Activated naive CD4-positive, alpha-beta T cell treated with anti-CD3 and anti-CD28 coated beads for 36 hours (primary cell): ENCODE measurements at regions of chr14 and their contacts with region 1.

Region 1: DNA sequence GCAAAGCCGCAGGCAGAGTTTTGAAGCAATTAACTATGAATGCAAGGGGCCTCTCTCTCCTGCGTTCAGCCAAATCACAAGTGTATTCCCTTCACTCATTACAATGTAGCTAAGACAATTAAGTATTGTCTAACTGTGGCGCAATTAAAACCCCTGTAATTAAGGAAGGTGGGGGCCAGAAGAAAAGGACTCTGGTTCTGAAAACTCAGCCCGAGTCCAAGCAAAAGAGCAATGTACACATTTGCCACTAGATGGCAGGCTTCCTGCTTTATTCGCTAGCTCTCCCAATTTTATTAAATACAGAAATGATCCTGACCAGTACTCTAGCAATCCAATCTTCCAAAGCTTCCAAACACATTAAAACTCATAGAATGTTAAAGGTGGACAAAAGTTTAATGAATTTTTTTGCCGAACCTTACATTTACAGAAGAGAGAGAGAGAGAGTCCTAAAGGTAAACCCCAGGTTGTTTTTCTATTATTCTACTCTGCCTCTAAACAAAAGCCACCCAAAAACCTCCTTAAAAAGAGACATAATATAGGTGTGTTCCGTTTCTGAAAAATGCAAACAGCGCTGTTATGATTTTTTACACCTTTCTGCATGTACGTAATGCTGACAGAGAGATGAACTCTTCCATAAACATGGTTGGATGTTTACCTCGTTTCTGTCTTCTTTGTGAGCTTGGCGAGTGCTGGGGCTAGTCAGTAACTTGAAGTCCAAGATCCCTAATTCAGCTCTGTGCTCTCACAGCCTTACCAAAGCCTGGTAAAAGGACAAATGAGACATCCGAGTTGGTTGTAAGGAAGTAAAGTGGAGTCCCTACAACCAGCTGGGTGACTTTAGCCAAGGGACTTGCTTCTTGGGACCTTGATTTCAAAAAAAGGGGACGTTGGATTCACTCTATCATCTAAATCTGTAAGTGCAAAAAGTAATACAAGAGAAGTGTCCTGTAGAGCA is 50.9 kb upstream of the VASH1 start:
- DNase-seq: peak; percentile 53
- H3K4me3 Mint-ChIP-seq: no peak overlapping the region
- H3K27ac Mint-ChIP-seq: no peak overlapping the region
- H3K4me1 Mint-ChIP-seq: no peaks in the 10 kb centered on the region
- H3K27me3 Mint-ChIP-seq: peaks cover 3% of the 10 kb centered on the region

Region 2: DNA sequence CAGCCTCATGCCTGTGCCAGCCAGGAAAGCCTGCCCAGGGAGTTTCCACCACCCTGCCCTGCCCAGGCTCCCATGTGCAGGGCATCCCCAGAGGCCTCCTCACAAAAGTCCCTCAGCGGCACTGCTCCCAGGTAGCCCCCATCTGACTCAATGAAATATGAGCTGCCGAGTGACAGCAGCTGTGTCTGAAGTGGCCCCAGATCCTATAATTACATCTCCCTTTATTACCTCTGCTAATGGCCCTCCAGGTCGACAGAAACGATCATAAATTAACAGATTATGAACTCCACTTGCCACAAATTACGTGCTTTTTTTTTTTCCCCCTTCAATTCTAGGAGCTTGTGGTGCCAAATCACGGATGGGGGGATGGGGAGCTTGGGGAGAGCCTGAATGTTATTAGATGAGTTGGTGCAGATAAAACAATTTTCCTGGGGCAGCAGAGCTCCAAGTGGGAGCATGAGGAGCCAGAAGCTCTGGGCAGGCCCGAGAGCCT is 224.0 kb before region 1 on chr14:
- CTCF ChIA-PET with region 1: no interaction called
- intact Hi-C with region 1: no loop called
- DNase-seq: no peak
- H3K4me3 Mint-ChIP-seq: no peak overlapping the region
- H3K27ac Mint-ChIP-seq: no peak overlapping the region
- H3K4me1 Mint-ChIP-seq: no peaks in the 10 kb centered on the region
- H3K27me3 Mint-ChIP-seq: no peaks in the 10 kb centered on the region

Region 3: GRCh38 chr14:76677534-76678145 is 32.7 kb before region 1 on chr14:
- CTCF ChIA-PET with region 1: no interaction called
- intact Hi-C with region 1: no loop called
- DNase-seq: no peak
- H3K4me3 Mint-ChIP-seq: no peak overlapping the region
- H3K27ac Mint-ChIP-seq: no peak overlapping the region
- H3K4me1 Mint-ChIP-seq: no peaks in the 10 kb centered on the region
- H3K27me3 Mint-ChIP-seq: peaks cover 10% of the 10 kb centered on the region

Region 4: DNA sequence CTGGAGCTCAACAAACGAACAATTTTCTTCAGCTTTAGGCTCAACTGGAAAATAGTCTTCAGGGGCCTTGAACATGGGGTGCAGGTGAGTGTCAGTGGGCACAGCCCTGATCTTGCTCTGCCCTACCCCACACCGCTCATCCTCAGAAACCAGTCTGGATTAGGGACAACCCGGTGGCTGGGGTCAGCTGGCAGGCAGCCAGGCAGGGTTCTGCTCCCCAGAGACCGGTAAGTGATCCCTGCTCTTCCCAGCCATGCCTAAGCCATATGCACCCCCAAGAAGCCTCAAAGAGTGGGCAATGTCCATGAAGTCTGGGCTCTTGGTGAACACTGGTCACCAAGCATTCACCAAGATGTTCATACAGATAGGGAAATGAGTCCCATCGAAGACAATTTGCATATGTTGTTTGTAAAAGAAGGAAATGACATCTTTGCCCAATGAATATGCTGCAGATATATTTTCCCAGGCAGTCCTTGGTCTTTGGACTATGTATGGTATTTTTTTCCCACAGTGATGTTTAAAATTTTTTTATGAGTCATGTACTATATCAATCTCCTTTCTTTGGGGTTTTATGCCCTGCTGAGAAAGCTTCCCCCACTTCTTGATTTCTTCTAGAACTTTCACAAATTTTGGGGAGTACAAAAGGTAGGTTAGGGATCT is 13.0 kb before region 1 on chr14:
- CTCF ChIA-PET with region 1: interaction called, 10 read pairs
- intact Hi-C with region 1: no loop called
- DNase-seq: no peak
- H3K4me3 Mint-ChIP-seq: no peak overlapping the region
- H3K27ac Mint-ChIP-seq: no peak overlapping the region
- H3K4me1 Mint-ChIP-seq: no peaks in the 10 kb centered on the region
- H3K27me3 Mint-ChIP-seq: no peaks in the 10 kb centered on the region

Region 5: DNA sequence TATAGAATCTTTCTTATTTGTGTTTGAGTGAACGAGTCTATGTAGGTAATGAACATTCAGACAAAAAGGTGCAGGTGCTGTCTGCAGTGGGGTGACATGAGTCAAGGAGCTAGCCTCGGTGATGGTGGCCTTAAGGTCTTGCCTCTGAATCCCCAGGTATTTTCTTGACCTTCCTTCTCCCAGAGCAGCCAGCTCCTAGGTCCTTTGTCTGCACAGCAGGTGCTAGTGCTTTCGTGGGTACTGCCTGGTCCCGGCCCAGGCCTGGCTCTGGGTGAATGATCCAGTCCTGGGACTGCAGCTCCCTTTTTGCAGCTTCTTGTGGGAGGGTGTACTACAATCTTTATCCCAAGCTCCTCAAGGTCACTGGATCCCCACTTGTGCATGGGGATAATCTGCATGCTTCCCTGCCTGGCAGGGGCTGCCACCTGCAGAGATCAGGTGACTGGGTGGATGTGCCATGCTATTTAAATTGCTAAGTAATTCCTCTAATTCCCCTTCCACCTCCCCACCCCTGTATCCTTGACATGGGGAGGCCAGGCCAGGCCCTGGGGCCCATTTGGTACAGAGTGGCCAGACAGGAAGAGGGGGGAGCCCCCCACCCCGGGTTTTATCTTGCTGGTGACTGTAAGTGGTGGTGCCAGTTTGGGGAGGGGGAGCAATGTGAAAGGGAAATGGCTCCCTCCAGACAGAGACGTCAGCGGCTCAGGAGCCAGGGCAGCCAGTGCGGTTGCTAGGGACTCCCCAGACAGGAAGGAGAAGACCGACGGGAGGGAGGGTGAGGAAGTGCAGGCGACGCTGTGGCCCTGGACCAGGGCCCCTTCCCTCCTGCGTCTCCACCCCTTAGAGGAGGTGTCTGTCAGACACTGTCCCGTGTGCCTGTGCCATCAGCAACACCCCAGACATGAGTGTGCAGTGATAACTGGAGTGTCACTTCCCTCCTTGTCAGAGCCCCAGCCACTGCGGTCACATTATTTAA is 57.6 kb after region 1 on chr14:
- CTCF ChIA-PET with region 1: interaction called, 13 read pairs
- intact Hi-C with region 1: no loop called
- DNase-seq: peak; percentile 91
- H3K4me3 Mint-ChIP-seq: peak overlapping the region; percentile 1
- H3K27ac Mint-ChIP-seq: peak overlapping the region; percentile 6
- H3K4me1 Mint-ChIP-seq: peaks cover 14% of the 10 kb centered on the region
- H3K27me3 Mint-ChIP-seq: peaks cover 21% of the 10 kb centered on the region

Region 6: GRCh38 chr14:76784266-76785264 is 74.2 kb after region 1 on chr14:
- CTCF ChIA-PET with region 1: interaction called, 76 read pairs
- intact Hi-C with region 1: loop called (anchors 1 kb)
- DNase-seq: peak; percentile 80
- H3K4me3 Mint-ChIP-seq: no peak overlapping the region
- H3K27ac Mint-ChIP-seq: no peak overlapping the region
- H3K4me1 Mint-ChIP-seq: peaks cover 19% of the 10 kb centered on the region
- H3K27me3 Mint-ChIP-seq: no peaks in the 10 kb centered on the region

Region 7: DNA sequence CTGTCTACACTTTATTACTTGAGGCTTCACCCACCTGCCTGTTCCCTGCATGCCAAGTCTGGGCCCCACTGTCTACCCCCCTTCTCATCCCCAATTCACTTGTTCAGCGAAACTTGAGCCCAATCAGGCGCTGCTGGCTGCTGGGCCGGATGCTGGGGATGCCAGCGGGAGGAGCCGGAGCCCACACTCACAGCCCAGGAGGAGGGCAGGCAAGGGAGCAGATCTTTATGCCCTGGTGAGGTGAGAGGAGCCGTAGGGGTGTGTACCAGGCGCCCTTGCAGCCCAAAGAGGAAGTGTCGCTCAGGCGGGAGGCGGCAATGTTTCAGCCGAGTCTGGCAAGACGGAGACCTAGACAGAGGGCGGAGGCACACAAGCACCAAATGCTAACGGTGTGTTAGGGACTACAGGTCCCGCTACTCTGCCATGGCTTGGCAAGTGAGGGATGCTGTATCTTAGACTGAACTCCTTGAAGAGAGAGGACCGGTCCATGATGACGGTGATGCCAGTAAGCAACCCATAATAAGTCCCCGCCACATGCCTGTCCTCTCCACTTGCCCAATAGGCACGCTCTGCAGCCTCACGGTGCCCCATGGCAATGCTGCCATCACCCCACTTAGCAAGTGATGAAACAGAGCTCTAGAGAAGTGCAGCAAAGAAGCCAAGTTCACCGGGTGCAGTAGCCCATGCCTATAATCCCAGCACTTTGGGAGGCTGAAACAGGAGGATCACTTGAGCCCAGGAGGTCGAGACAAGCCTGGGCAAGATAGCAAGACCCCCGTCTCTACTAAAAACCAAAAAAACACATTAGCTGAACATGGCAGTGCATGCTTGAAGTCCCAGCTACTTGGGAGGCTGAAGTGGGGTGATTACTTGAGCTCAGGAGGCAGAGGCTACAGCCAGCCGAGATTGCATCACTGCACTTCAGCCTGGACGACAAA is 157.5 kb after region 1 on chr14:
- CTCF ChIA-PET with region 1: interaction called, 5 read pairs
- intact Hi-C with region 1: loop called (anchors 2 kb)
- DNase-seq: peak; percentile 68
- H3K4me3 Mint-ChIP-seq: no peak overlapping the region
- H3K27ac Mint-ChIP-seq: no peak overlapping the region
- H3K4me1 Mint-ChIP-seq: peaks cover 31% of the 10 kb centered on the region
- H3K27me3 Mint-ChIP-seq: no peaks in the 10 kb centered on the region